ENCODE measurements at regions of chr2 and their contacts with region 1.

Region 1: DNA sequence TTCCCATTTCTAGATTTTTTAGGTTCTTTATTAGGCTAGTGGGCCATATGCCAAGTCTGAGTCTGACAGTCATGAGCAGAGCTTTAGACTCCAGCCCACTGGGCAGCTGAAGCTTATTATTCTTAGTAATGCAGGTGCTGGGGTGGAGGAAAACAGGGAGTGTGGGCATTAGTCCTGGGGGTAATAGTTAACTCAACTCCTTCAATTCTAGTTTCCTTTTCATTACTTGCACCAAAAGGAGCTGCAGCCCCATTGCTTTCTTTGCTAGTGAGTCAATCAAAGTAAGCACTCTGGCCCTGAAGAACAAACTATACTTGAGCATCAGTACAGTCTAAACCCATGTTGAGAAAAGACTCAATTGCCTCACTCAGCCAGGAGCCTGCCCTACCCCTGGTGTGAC is 35.5 kb downstream of the ICOS start:
- DNase-seq: no peak
- H3K4me3 Mint-ChIP-seq: no peak overlapping the region
- H3K27ac Mint-ChIP-seq: no peak overlapping the region
- H3K4me1 Mint-ChIP-seq: peaks cover 26% of the 10 kb centered on the region
- H3K27me3 Mint-ChIP-seq: no peaks in the 10 kb centered on the region

Region 2: GRCh38 chr2:203940039-203940438 is 32.0 kb before region 1 on chr2:
- CTCF ChIA-PET with region 1: interaction called, 3 read pairs
- POLR2A ChIA-PET with region 1: interaction called, 5 read pairs
- intact Hi-C with region 1: loop called (anchors 2 kb)
- DNase-seq: no peak
- H3K4me3 Mint-ChIP-seq: peak overlapping the region; percentile 97
- H3K27ac Mint-ChIP-seq: peak overlapping the region; percentile 97
- H3K4me1 Mint-ChIP-seq: peaks cover 45% of the 10 kb centered on the region
- H3K27me3 Mint-ChIP-seq: no peaks in the 10 kb centered on the region

Region 3: DNA sequence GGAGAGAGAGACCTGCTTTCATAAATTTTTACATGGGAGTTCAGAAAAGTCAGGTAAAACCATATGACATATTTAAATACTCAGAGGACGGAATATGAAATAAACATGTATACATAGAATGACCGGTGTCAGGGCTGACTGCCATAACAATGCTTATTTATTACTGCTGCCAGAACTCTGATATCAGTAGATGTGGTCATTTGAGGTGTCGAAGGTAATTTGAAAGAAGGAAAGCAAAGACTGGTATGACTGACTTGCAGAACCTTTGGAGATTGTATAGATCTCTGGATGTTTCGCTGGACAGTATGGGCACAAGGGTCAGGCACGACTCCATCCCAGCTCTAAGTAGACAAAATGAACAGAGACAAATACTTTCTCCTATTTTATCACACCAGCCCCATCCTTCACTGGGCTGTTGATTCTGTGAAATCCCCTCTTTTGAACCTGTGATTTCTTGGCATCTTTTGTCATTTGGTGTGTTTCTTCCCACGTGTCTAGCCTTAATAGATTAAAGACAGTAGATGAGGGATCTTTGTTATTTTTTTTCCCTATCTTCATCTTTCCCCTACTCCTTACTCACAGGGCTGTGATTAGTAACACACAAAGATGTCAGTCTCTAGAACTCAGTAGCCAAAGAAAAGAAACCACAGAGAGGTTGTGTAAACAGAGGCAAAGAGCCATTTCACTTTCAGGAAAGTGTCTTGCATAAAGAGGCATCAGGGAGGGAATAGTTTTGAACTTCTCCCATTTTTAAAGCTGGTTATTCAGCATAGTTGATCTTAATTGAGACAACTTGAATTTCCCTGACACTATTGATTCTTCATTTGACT is 26.1 kb after region 1 on chr2:
- CTCF ChIA-PET with region 1: interaction called, 3 read pairs
- POLR2A ChIA-PET with region 1: interaction called, 5 read pairs
- intact Hi-C with region 1: loop called (anchors 1 kb)
- DNase-seq: no peak
- H3K4me3 Mint-ChIP-seq: peak overlapping the region; percentile 21
- H3K27ac Mint-ChIP-seq: peak overlapping the region; percentile 82
- H3K4me1 Mint-ChIP-seq: peaks cover 65% of the 10 kb centered on the region
- H3K27me3 Mint-ChIP-seq: no peaks in the 10 kb centered on the region

Region 4: GRCh38 chr2:204060841-204061240 is 88.8 kb after region 1 on chr2:
- CTCF ChIA-PET with region 1: no interaction called
- POLR2A ChIA-PET with region 1: no interaction called
- intact Hi-C with region 1: no loop called
- DNase-seq: no peak
- H3K4me3 Mint-ChIP-seq: no peak overlapping the region
- H3K27ac Mint-ChIP-seq: no peak overlapping the region
- H3K4me1 Mint-ChIP-seq: no peaks in the 10 kb centered on the region
- H3K27me3 Mint-ChIP-seq: no peaks in the 10 kb centered on the region